Tibial artery (tissue), 4 donors: ENCODE measurements at regions of chr6 and their contacts with region 1.

Region 1: GRCh38 chr6:7579851-7580250 is 10.1 kb upstream of the SNRNP48 start:
- DNase-seq: no peak
- H3K4me3 ChIP-seq: no peak overlapping the region
- H3K27ac ChIP-seq: no peak overlapping the region
- H3K4me1 ChIP-seq: no peaks in the 10 kb centered on the region
- H3K27me3 ChIP-seq: peaks cover 0 to 4% of the 10 kb centered on the region in 2 donors
- CTCF ChIP-seq: no peak

Region 2: GRCh38 chr6:8207200-8208191 is 627.6 kb after region 1 on chr6:
- intact Hi-C with region 1: loop called (anchors 10 kb)
- DNase-seq: no peak
- H3K4me3 ChIP-seq: no peak overlapping the region
- H3K27ac ChIP-seq: no peak overlapping the region
- H3K4me1 ChIP-seq: no peaks in the 10 kb centered on the region
- H3K27me3 ChIP-seq: no peaks in the 10 kb centered on the region
- CTCF ChIP-seq: no peak